H1 (cell line): ENCODE measurements at regions of chr18 and their contacts with region 1.

Region 1: DNA sequence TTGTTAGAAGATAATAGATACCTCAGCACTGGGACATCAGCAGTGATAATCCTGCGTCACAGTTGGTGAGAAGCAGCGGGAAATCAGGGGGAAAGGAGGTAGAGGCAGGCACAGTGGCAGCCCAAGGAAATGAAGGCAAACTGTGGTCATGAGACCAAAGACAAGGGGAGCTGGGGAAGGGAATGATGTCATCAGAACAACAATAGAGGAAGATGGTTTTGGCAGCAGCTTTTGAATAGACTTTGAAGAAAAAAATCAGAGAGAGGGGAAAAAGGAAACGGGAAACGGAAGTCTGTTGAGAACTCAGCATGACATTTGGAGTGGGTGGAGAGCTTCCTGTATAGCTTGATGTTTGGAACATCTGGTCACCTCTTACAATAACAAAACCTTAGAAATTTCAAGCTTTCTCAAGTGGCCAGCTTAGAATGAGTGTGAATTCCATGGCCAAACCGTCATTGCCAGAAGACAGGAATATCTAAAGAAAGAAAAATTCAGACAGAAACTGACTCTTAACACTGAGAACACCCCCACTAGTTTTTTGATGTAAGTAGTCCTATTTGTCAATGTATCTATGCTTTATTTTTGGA is 18.4 kb upstream of the YES1 start:
- DNase-seq: no peak
- H3K4me3 ChIP-seq: peak overlapping the region in 1 of 4 experiments; percentile 4; a peak in 1 of 8 replicates
- H3K27ac ChIP-seq: no peak overlapping the region
- H3K4me1 ChIP-seq: peaks cover 0 to 6% (median 2%) of the 10 kb centered on the region in 4 experiments; a peak in 3 of 7 replicates
- H3K27me3 ChIP-seq: no peaks in the 10 kb centered on the region
- CTCF ChIP-seq: no peak
- EP300 ChIP-seq: no peak
- POLR2A ChIP-seq: no peak
- RAD21 ChIP-seq: no peak

Region 2: GRCh38 chr18:629269-630150 is 200.9 kb before region 1 on chr18:
- CTCF ChIA-PET with region 1: interaction called, 63 read pairs
- POLR2A ChIA-PET with region 1: no interaction called
- DNase-seq: no peak
- H3K4me3 ChIP-seq: no peak overlapping the region
- H3K27ac ChIP-seq: no peak overlapping the region
- H3K4me1 ChIP-seq: no peaks in the 10 kb centered on the region; a peak in 1 of 7 replicates
- H3K27me3 ChIP-seq: no peaks in the 10 kb centered on the region
- CTCF ChIP-seq: peak in 1 of 3 experiments; percentile 39; a peak in 2 of 4 replicates
- EP300 ChIP-seq: no peak
- POLR2A ChIP-seq: no peak
- RAD21 ChIP-seq: peak in 1 of 2 experiments; percentile 18; a peak in 1 of 4 replicates

Region 3: GRCh38 chr18:706405-706804 is 124.0 kb before region 1 on chr18:
- CTCF ChIA-PET with region 1: interaction called, 13 read pairs
- POLR2A ChIA-PET with region 1: no interaction called
- DNase-seq: peak in 1 of 2 experiments; percentile 22
- H3K4me3 ChIP-seq: no peak overlapping the region
- H3K27ac ChIP-seq: no peak overlapping the region
- H3K4me1 ChIP-seq: peaks cover 0 to 2% (median 1%) of the 10 kb centered on the region in 4 experiments; a peak in 2 of 7 replicates
- H3K27me3 ChIP-seq: no peaks in the 10 kb centered on the region
- CTCF ChIP-seq: no peak
- EP300 ChIP-seq: no peak
- POLR2A ChIP-seq: no peak
- RAD21 ChIP-seq: no peak

Region 4: DNA sequence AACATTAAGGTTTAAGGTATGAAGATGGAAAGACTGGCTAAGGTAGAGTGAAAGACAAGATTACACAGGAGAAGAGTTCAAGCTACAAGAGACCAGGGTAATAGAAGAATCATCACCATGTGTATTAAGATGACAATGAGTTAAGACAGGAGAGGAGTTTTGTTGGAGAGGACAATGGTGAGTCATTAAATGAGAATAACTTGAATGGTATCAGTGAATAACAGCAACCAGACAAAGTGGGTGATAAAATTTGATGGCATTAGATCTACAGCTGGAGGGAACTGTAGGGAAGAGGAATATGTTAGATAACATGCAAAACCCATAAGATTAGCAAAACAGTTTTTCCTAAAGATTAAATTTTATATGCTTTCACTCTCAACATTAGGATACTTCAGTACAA is 99.2 kb before region 1 on chr18:
- CTCF ChIA-PET with region 1: interaction called, 16 read pairs
- POLR2A ChIA-PET with region 1: no interaction called
- DNase-seq: no peak
- H3K4me3 ChIP-seq: no peak overlapping the region
- H3K27ac ChIP-seq: no peak overlapping the region
- H3K4me1 ChIP-seq: no peaks in the 10 kb centered on the region
- H3K27me3 ChIP-seq: no peaks in the 10 kb centered on the region
- CTCF ChIP-seq: no peak
- EP300 ChIP-seq: no peak
- POLR2A ChIP-seq: no peak
- RAD21 ChIP-seq: no peak

Region 5: DNA sequence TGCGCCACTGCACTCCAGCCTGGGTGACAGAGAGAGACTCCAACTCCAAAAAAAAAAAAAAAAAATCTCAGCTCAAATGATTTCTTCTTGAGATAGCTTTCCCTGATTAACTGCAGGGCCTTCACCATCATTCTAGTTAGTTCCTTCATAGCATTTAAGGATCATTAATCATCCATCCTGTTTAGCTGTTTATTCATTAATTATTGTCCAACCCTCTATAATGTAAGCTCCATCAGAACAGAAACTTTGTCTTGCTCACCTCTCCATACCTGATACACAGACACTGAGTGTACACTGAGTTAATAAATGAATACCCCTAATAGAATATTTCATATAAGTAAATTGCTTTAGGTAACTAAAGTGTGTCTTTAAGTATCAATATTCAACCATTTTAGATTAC is 75.7 kb before region 1 on chr18:
- CTCF ChIA-PET with region 1: interaction called, 18 read pairs
- POLR2A ChIA-PET with region 1: no interaction called
- DNase-seq: no peak
- H3K4me3 ChIP-seq: no peak overlapping the region
- H3K27ac ChIP-seq: no peak overlapping the region
- H3K4me1 ChIP-seq: no peaks in the 10 kb centered on the region
- H3K27me3 ChIP-seq: no peaks in the 10 kb centered on the region
- CTCF ChIP-seq: no peak
- EP300 ChIP-seq: no peak
- POLR2A ChIP-seq: no peak
- RAD21 ChIP-seq: no peak

Region 6: GRCh38 chr18:902229-902628 is 71.8 kb after region 1 on chr18:
- CTCF ChIA-PET with region 1: no interaction called
- POLR2A ChIA-PET with region 1: no interaction called
- DNase-seq: no peak
- H3K4me3 ChIP-seq: no peak overlapping the region
- H3K27ac ChIP-seq: no peak overlapping the region
- H3K4me1 ChIP-seq: peaks cover 0 to 17% (median 9%) of the 10 kb centered on the region in 4 experiments; a peak in 5 of 7 replicates
- H3K27me3 ChIP-seq: peaks cover 44 to 65% (median 54%) of the 10 kb centered on the region in 4 experiments
- CTCF ChIP-seq: peak in 2 of 3 experiments; percentile 32 to 47; a peak in 2 of 4 replicates
- EP300 ChIP-seq: no peak
- POLR2A ChIP-seq: no peak
- RAD21 ChIP-seq: peak; percentile 66 to 72